ENCODE measurements at regions of chr2 and their contacts with region 1.

Region 1: DNA sequence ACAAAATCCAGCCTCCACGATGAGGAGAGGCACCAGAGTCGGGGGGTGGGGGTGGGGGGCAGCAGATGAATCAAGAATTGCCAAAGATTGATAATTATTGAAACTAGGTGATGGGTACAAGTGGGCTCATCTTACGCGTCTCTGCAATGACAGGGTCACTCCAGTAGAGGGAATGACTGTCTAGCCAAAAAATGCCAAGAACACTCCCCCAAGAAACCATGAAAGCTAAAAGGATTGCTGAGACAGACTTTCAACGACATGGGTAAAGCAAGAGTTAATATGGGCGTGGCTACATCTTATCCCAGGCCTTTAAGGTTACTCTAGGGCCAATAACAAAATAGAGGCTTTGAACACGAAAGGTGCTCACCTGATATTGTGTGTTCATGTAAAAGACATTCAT is 86.5 kb downstream of the STK39 start:
- DNase-seq: peak; percentile 32
- H3K4me3 Mint-ChIP-seq: no peak overlapping the region
- H3K27ac Mint-ChIP-seq: no peak overlapping the region
- H3K4me1 Mint-ChIP-seq: peaks cover 32% of the 10 kb centered on the region
- H3K27me3 Mint-ChIP-seq: no peaks in the 10 kb centered on the region

Region 2: DNA sequence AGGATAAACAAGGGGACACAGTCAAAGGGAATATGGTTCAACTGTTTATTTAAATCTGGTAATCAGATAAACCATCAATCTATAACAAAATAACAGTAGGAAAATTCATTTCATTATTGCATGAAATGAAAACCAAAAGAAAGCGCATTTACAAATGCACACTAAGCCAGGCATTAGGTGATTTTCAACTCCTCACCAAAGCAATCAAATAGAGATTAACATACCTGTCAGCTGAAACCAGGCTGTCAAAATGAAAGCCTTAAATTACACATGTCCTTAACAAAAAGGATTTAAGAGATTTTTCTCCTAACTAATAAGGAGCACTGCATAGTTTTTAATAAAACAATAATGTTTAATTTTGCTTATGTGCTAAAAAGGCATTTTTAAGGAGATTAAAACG is 63.4 kb after region 1 on chr2:
- CTCF ChIA-PET with region 1: interaction called, 3 read pairs
- intact Hi-C with region 1: loop called (anchors 1 kb)
- DNase-seq: no peak
- H3K4me3 Mint-ChIP-seq: no peak overlapping the region
- H3K27ac Mint-ChIP-seq: no peak overlapping the region
- H3K4me1 Mint-ChIP-seq: peaks cover 46% of the 10 kb centered on the region
- H3K27me3 Mint-ChIP-seq: no peaks in the 10 kb centered on the region

Region 3: GRCh38 chr2:168336864-168337263 is 176.0 kb after region 1 on chr2:
- CTCF ChIA-PET with region 1: interaction called, 8 read pairs
- intact Hi-C with region 1: loop called (anchors 1 kb)
- DNase-seq: peak; percentile 80
- H3K4me3 Mint-ChIP-seq: no peak overlapping the region
- H3K27ac Mint-ChIP-seq: no peak overlapping the region
- H3K4me1 Mint-ChIP-seq: peaks cover 7% of the 10 kb centered on the region
- H3K27me3 Mint-ChIP-seq: no peaks in the 10 kb centered on the region

Region 4: DNA sequence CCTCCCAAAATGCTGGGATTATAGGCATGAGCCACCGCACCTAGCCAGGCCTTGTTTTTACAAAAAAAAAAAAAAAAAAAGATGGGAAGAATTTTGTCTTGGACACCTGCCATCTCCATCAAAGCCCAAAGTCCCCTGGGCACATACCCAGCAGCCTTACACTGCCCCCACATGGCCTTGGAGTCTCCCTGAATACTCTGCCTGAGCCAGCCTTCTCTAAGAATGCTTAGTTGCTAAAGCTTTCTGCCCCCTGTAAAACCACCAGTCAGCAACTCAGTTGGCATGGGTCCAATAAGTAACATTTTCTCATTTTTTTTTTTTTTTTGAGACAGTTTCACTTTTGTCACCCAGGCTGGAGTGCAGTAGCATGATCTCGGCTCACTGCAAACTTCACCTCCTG is 688.7 kb after region 1 on chr2:
- CTCF ChIA-PET with region 1: no interaction called
- intact Hi-C with region 1: no loop called
- DNase-seq: peak; percentile 14
- H3K4me3 Mint-ChIP-seq: no peak overlapping the region
- H3K27ac Mint-ChIP-seq: no peak overlapping the region
- H3K4me1 Mint-ChIP-seq: no peaks in the 10 kb centered on the region
- H3K27me3 Mint-ChIP-seq: no peaks in the 10 kb centered on the region

Region 5: DNA sequence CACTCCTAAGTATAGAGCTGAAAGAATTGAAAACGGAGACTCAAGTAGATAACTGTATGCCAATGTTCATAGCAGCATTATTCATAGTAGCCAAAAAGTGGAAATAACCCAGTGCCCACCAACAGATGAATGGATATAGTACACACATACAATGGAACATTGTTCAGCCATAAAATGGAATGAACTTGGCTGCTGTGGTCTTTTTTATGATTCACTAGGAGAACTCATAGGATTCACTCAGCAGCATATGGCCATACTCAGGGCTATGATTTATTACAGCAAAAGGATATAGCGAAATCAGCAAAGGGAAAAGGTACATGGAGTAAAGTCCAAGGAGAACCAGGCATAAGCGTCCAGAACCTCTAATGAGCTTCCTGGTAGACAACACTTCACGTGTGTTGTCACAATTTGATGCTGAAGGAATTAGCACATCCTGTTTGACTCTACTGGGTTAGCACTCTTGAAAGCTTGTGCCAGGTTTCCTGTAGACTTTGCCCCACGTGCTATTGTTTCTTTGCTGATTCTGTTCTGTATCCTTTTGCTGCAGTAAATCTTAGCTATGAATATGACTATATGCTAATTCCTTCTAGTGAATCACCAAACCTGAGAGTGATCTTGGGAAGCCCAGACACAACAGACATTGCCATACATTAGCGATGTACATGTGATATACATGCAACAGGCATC is 713.6 kb after region 1 on chr2:
- CTCF ChIA-PET with region 1: no interaction called
- intact Hi-C with region 1: no loop called
- DNase-seq: no peak
- H3K4me3 Mint-ChIP-seq: no peak overlapping the region
- H3K27ac Mint-ChIP-seq: no peak overlapping the region
- H3K4me1 Mint-ChIP-seq: no peaks in the 10 kb centered on the region
- H3K27me3 Mint-ChIP-seq: no peaks in the 10 kb centered on the region

Measured in activated naive CD4-positive, alpha-beta T cell treated with anti-CD3 and anti-CD28 coated beads for 36 hours (primary cell).